CD8-positive, alpha-beta T cell (primary cell): ENCODE measurements at regions of chr15 and their contacts with region 1.

Region 1: DNA sequence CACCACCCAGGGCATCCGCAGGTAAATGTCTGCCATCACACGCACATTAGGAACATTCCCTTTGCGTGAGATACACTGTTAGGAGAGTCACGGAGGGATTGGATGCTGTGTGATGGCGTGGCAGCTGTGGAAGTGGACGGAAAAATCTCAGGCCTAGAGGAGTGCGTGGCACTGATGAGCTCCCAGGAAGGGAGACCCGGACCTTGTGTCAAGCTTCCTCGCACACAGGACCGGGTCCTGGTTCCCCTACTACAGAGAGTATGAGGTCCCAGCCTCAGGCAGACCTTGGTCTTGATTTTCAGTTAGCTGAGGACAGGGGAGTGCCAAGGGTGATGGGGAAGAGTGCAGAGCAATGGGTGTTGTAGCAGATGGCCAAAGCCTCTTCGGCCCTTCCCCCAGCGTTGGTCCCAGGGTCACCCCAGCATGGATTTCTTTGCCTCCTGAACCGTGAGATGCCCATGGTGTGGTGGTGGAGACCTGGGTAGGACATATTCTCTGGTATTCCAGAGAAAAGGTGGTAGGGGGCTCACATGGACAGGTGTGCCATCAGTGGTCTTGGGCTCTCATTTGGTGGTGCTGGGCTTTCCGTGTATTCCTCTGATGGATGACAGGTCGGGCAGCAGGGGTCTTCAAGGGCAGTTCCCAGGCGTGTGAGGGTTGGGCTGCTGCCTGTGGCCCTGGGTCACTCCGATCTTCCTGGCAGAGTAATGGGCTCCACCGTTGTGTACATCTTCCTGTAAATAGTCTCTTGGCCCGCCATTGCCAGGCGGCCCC is 105.1 kb downstream of the SNRPN start:
- DNase-seq: peak in 1 of 9 experiments; percentile 25
- ATAC-seq: no peak
- H3K4me3 ChIP-seq: no peak overlapping the region
- H3K4me3 Mint-ChIP-seq: no peak overlapping the region
- H3K27ac ChIP-seq: no peak overlapping the region
- H3K27ac Mint-ChIP-seq: no peak overlapping the region
- H3K4me1 ChIP-seq: no peaks in the 10 kb centered on the region
- H3K4me1 Mint-ChIP-seq: no peaks in the 10 kb centered on the region
- H3K27me3 ChIP-seq: no peaks in the 10 kb centered on the region
- H3K27me3 Mint-ChIP-seq: no peaks in the 10 kb centered on the region
- CTCF ChIP-seq: no peak

Region 2: GRCh38 chr15:25391971-25392721 is 332.3 kb after region 1 on chr15:
- CTCF ChIA-PET with region 1: no interaction called
- POLR2A ChIA-PET with region 1: no interaction called
- intact Hi-C with region 1: loop called in 1 of 2 experiments (anchors 10 kb)
- DNase-seq: no peak
- ATAC-seq: no peak
- H3K4me3 ChIP-seq: no peak overlapping the region
- H3K4me3 Mint-ChIP-seq: no peak overlapping the region
- H3K27ac ChIP-seq: no peak overlapping the region
- H3K27ac Mint-ChIP-seq: no peak overlapping the region
- H3K4me1 ChIP-seq: no peaks in the 10 kb centered on the region
- H3K4me1 Mint-ChIP-seq: peaks cover 35% of the 10 kb centered on the region
- H3K27me3 ChIP-seq: no peaks in the 10 kb centered on the region
- H3K27me3 Mint-ChIP-seq: no peaks in the 10 kb centered on the region
- CTCF ChIP-seq: no peak